Brain microvascular endothelial cell (primary cell): ENCODE measurements at regions of chr10 and their contacts with region 1.

Region 1: GRCh38 chr10:47024399-47025252 is 113.4 kb downstream of the PTPN20 start:
- DNase-seq: peak; percentile 43
- H3K4me3 ChIP-seq: no peak overlapping the region
- H3K27ac ChIP-seq: no peak overlapping the region
- H3K27me3 ChIP-seq: no peaks in the 10 kb centered on the region
- CTCF ChIP-seq: peak; percentile 95

Region 2: DNA sequence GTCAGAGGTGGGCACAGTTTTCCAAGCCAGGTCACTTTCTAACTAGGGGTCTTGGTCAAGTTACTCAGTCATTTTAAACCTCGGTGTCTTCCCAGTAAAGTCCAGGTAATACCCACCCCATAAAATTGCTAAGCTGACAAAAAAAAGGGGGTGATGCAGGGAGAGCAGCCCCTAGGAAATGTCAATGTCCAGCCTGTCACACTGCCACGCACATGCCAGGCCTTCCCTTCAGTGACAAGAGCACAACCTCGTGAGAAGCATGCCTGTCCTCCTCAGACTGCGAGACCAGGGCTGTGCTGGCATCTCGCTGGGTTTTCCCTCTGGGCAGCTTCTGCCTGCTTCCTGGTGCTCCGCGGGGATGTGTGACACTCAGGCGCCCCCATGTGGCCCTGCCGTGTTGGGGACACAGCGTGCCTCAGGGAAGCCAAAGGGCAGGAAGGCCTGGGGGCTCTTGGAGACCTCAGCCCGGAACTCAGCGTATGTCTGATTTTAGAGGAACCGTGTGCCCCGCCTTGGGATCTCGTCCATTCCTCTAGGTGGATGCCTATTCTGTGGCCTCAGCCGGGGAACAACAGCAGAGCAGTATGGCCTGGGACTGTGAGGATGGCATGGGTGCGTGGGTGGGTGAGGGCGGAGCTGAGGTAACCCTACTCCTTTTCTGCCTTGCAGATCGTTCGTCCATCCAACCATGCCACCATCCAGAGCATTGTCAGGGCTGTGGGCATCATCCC is 287.5 kb after region 1 on chr10:
- in situ Hi-C with region 1: loop called (anchors 25 kb)
- DNase-seq: peak; percentile 66
- H3K4me3 ChIP-seq: no peak overlapping the region
- H3K27ac ChIP-seq: no peak overlapping the region
- H3K27me3 ChIP-seq: no peaks in the 10 kb centered on the region
- CTCF ChIP-seq: peak; percentile 97